ENCODE measurements at regions of chr19 and their contacts with region 1.

Region 1: DNA sequence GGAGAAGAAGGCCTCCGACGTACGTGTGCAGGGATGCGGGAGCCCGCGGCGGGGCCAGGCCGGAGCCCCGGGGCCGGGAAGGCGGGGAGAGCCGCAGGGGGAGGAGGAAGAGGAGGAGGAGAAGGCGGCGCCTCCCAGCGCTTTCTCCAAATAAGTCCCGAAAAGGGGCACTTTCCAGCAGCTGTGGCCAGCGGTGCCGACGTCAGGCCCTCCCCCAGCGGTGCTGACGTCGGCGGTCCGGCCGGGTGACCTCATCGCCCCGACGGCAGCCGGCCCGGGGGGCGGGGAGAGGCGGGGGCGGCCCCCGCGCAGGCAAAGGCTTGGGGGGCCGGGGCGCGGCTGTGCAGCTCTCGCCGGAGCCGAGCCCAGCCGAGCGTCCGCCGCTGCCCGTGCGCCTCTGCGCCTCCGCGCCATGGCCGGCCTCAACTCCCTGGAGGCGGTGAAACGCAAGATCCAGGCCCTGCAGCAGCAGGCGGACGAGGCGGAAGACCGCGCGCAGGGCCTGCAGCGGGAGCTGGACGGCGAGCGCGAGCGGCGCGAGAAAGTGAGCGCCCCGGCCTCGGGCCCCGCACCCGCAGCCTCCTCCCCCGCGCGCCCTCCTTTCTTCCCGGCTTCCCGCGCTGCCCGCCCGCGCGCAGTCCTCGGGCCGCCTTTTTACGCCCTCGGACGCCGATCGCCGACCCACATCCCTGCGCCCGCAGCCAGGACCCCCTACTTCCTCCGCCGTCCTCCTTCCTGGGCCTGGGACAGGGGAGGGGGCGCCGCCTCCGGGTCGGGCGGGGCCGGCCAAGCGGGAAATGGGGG is at the start of gene TPM4:
- H3K4me3 ChIP-seq: peak within 1 kb of the TSS; percentile 91
- H3K27ac ChIP-seq: peak within 1 kb of the TSS; percentile 97
- H3K4me1 ChIP-seq: peaks cover 12% of the 10 kb centered on the region
- CTCF ChIP-seq: no peak

Region 2: DNA sequence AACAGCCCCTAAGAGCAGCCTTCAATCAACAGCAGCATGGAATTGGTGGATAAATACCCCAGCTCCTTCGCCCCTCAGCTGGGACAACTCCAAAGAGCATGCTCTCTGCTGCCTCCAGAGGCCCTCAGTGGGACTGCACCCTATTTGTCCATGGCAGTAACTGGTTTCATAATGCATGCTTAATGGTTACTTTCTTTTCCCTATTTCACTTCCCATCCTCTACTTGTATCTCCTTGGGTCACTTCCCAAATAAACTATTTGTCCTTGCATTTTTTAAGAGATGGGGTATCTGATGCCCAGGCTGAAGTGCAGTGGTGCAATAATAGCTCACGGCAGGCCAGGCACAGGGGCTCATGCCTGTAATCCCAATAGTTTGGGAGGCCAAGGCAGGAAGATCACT is 13.6 kb before region 1 on chr19:
- CTCF ChIA-PET with region 1: interaction called, 44 read pairs
- POLR2A ChIA-PET with region 1: interaction called, 4 read pairs
- H3K4me3 ChIP-seq: no peak overlapping the region
- H3K27ac ChIP-seq: no peak overlapping the region
- H3K4me1 ChIP-seq: no peaks in the 10 kb centered on the region
- CTCF ChIP-seq: peak; percentile 40; the same call in 1 of the 2 replicates

Region 3: DNA sequence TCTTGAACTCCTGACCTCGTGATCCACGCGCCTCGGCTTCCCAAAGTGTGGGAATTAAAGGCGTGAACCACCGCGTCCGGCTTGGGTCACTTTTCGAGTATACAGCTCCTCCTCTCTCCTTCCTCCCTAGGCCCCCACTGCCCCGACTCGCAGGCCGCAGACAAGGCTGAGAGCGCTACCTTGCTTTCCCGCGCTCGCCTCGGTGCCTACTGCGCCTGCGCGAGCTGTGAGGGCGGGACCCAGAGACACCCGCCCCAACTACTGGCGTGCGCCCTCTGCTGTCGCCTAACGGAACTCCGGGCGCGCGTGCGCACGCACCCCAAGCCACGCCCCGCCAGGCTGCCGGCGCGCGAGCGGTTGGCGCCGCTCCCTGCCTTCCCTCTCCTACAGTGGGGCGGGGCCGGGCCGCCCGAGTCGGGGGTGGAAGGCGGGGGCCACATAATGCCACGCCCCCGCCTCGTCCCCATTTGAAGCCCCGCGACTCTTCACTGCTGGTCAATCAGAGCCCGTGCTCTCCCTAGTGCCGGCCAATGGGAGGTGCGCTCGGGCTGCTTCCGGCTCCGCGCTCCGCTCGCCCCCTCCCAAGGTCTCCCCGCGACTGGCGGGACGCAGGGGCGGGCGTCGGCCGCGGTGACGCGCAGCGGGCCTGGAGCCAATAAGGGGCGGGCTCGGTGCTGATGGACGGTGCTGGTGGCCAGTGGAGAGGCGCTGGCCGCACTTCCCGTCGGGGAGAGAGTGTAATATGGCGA is 35.0 kb after region 1 on chr19 and contains the start of gene RAB8A:
- CTCF ChIA-PET with region 1: interaction called, 5 read pairs
- POLR2A ChIA-PET with region 1: interaction called, 20 read pairs
- H3K4me3 ChIP-seq: peak within 1 kb of the TSS; percentile 98
- H3K27ac ChIP-seq: peak within 1 kb of the TSS; percentile 59; the same call in 1 of the 2 replicates
- H3K4me1 ChIP-seq: peaks cover 4% of the 10 kb centered on the region; the same call in 1 of the 2 replicates
- CTCF ChIP-seq: peak; percentile 98

Region 4: GRCh38 chr19:16197622-16198369 is 121.4 kb after region 1 on chr19 and contains the start of gene AP1M1:
- CTCF ChIA-PET with region 1: no interaction called
- POLR2A ChIA-PET with region 1: interaction called, 12 read pairs
- H3K4me3 ChIP-seq: peak within 1 kb of the TSS; percentile 78
- H3K27ac ChIP-seq: peak within 1 kb of the TSS; percentile 53
- H3K4me1 ChIP-seq: peaks cover 5% of the 10 kb centered on the region; the same call in 1 of the 2 replicates
- CTCF ChIP-seq: no peak

Region 5: DNA sequence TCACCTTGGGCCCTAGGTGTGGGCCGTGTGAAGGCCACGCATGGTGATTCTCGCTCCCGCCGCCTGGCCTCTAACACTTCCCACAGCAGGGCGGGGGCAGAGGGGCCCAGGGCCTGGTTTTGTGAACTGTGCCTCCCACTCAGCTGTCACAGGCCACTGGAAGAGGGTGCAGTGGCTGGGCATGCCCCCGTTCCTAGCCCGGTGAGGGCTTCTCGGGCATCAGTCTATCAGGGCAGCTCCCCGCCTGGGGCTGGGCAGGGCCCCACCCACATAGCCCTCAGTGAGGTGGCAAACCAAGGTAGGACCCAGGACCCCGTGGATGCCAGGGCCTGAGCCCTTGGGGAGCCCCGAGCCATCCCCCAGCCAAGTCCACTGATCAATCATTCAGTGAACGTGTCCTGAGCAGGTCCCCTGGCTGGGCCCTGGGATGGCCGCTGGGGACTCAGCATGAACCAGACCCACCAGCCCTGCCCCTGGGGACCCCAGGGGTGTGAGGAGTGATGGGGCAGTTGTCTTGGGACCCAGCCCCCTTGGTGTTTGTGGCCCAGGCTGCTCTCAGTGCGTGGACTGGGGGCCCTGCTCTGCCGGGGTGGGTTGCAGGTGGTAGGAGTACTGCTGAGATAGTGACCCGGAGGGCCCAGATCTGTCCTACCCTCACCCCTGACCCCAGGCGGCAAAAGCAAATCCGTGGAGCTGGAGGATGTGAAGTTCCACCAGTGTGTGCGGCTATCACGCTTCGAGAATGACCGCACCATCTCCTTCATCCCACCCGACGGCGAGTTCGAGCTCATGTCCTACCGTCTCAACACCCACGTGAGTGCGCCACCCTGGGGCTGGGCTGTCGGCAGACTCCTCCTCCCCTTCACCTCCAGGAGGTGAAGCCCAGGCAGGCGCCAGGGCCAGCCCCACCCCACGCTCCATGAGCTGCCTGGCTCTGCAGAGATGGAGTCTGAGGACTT is 150.8 kb after region 1 on chr19:
- CTCF ChIA-PET with region 1: no interaction called
- POLR2A ChIA-PET with region 1: interaction called, 11 read pairs
- H3K4me3 ChIP-seq: no peak overlapping the region
- H3K27ac ChIP-seq: no peak overlapping the region
- H3K4me1 ChIP-seq: no peaks in the 10 kb centered on the region
- CTCF ChIP-seq: no peak

Measured in HEK293 (cell line).